A549 (cell line): ENCODE measurements at regions of chr1 and their contacts with region 1.

Region 1: DNA sequence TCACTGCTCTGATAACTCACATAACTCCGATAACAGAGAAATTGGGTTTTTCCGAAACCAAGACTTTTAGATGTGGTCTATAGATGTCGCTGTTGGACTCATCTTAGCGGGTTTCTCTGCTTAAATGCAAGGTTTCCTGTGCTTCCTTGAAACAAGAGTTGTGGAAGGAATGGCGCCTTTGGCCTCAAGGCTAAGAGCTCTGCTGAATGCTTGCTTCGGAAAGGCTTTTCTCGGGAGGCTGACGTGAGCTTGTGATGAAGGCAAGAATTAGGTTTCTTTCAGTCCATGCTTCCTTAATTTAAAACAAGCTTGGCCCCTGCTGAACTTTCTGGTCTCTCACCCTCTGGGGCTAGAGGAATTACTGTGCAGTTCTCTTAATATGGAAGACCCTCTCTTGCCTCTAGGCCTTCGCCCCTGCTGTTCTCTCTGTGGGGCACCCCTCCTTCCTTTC is 113.5 kb downstream of the MAP3K21 start:
- DNase-seq: peak; percentile 33 to 80
- ATAC-seq: peak; percentile 82 to 86
- H3K4me3 ChIP-seq: no peak overlapping the region
- H3K27ac ChIP-seq: peak overlapping the region; percentile 26 to 42; a peak in 4 of 6 replicates
- H3K4me1 ChIP-seq: peaks cover 23% of the 10 kb centered on the region
- CTCF ChIP-seq: peak; percentile 86
- EP300 ChIP-seq: no peak
- POLR2A ChIP-seq: no peak
- RAD21 ChIP-seq: peak; percentile 92 to 94

Region 2: DNA sequence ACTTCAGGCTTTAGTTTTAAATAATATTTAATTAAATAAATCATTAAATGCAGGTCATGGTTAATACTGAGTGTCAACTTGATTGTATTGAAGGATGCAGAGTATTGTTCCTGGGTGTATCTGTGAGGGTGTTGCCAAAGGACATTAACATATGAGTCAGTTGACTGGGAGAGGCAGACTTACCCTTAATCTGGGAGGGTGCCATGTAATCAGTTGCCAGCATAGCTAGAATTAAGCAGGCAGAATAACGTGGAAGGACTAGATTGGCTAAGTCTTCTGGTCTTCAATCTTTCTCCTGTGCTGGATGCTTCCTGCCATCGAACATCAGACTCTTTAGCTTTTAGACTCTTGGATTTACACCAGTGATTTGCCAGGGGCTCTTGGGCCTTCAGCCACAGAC is 28.2 kb before region 1 on chr1:
- CTCF ChIA-PET with region 1: interaction called, 10 read pairs
- POLR2A ChIA-PET with region 1: no interaction called
- DNase-seq: no peak
- ATAC-seq: no peak
- H3K4me3 ChIP-seq: no peak overlapping the region
- H3K27ac ChIP-seq: no peak overlapping the region
- H3K4me1 ChIP-seq: no peaks in the 10 kb centered on the region
- CTCF ChIP-seq: no peak
- EP300 ChIP-seq: no peak
- POLR2A ChIP-seq: no peak
- RAD21 ChIP-seq: no peak

Region 3: DNA sequence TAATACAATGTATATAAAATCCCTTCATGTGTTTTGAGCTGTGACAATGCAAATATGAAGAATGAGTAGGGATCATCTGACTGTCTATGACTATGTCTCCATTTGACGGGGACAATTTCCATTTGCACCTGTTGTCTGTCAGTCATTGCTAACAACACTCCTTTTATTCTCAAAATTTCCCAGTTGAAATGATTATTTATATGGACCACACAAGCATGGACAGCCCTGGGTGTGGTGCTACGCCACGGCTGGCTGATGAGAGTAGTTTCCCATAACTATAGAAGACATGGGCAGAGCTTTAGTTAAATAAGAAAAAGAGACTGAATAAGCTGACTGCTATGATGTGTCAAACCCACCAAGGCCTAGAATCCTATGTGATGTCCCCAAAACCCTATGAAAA is 22.4 kb after region 1 on chr1:
- CTCF ChIA-PET with region 1: interaction called, 13 read pairs
- POLR2A ChIA-PET with region 1: no interaction called
- DNase-seq: no peak
- ATAC-seq: no peak
- H3K4me3 ChIP-seq: no peak overlapping the region
- H3K27ac ChIP-seq: no peak overlapping the region
- H3K4me1 ChIP-seq: no peaks in the 10 kb centered on the region
- CTCF ChIP-seq: no peak
- EP300 ChIP-seq: no peak
- POLR2A ChIP-seq: no peak
- RAD21 ChIP-seq: no peak

Region 4: GRCh38 chr1:233904633-233905415 is 463.8 kb after region 1 on chr1 and contains the start of gene SLC35F3:
- CTCF ChIA-PET with region 1: interaction called, 23 read pairs
- POLR2A ChIA-PET with region 1: no interaction called
- DNase-seq: peak; percentile 76 to 84
- ATAC-seq: peak; percentile 87 to 88
- H3K4me3 ChIP-seq: peak within 1 kb of the TSS; percentile 89
- H3K27ac ChIP-seq: peak within 1 kb of the TSS; percentile 77 to 94
- H3K4me1 ChIP-seq: peaks cover 39% of the 10 kb centered on the region
- CTCF ChIP-seq: peak; percentile 88
- EP300 ChIP-seq: no peak; a peak in 1 of 5 replicates
- POLR2A ChIP-seq: peak; percentile 66
- RAD21 ChIP-seq: peak; percentile 56 to 88; a peak in 4 of 5 replicates
- polyA plus RNA-seq, gene SLC35F3: 7.1 and 7.8 TPM in 2 replicates

Region 5: GRCh38 chr1:234114648-234115307 is 673.8 kb after region 1 on chr1:
- CTCF ChIA-PET with region 1: interaction called, 35 read pairs
- POLR2A ChIA-PET with region 1: no interaction called
- DNase-seq: peak; percentile 52 to 69
- ATAC-seq: peak; percentile 66 to 67; a peak in 5 of 6 replicates
- H3K4me3 ChIP-seq: peak overlapping the region; percentile 34
- H3K27ac ChIP-seq: peak overlapping the region; percentile 56 to 78
- H3K4me1 ChIP-seq: peaks cover 25% of the 10 kb centered on the region
- CTCF ChIP-seq: peak; percentile 88
- EP300 ChIP-seq: no peak
- POLR2A ChIP-seq: no peak
- RAD21 ChIP-seq: peak; percentile 84 to 93